Heart right ventricle (tissue), 16 donors: ENCODE measurements at regions of chr2 and their contacts with region 1.

Region 1: GRCh38 chr2:207746131-207746530 is 23.6 kb downstream of the FZD5 start:
- DNase-seq: peak; percentile 17 to 28
- ATAC-seq: peak; percentile 71 to 87 (median 82)
- H3K4me3 ChIP-seq: no peak overlapping the region
- H3K27ac ChIP-seq: no peak overlapping the region
- H3K4me1 ChIP-seq: no peaks in the 10 kb centered on the region
- H3K27me3 ChIP-seq: no peaks in the 10 kb centered on the region
- CTCF ChIP-seq: peak; percentile 69 to 92 (median 86)

Region 2: DNA sequence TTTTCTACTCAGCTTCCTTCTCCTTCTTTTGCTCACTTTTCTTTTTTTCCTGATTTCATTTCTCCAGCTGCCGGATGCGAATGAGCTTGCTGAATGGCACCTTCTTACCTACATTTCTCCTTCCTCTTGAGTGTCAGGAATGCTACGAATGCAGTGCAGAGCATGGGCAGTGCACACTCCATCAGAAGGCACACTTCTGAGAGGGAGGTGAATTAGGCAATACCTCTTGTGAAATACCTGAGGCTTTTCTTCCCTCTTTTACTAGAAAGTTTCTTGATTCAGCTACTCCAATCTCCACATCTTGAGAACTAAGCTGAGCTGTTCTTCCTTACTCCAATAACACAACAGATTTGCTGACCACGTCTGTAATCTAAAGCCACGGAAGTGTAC is 228.1 kb after region 1 on chr2:
- intact Hi-C with region 1: loop called in 6 of 10 experiments (anchors 2 to 5 kb)
- DNase-seq: no peak
- ATAC-seq: no peak
- H3K4me3 ChIP-seq: no peak overlapping the region
- H3K27ac ChIP-seq: no peak overlapping the region
- H3K4me1 ChIP-seq: peaks cover 0 to 20% (median 8%) of the 10 kb centered on the region in 9 donors
- H3K27me3 ChIP-seq: no peaks in the 10 kb centered on the region
- CTCF ChIP-seq: no peak

Region 3: DNA sequence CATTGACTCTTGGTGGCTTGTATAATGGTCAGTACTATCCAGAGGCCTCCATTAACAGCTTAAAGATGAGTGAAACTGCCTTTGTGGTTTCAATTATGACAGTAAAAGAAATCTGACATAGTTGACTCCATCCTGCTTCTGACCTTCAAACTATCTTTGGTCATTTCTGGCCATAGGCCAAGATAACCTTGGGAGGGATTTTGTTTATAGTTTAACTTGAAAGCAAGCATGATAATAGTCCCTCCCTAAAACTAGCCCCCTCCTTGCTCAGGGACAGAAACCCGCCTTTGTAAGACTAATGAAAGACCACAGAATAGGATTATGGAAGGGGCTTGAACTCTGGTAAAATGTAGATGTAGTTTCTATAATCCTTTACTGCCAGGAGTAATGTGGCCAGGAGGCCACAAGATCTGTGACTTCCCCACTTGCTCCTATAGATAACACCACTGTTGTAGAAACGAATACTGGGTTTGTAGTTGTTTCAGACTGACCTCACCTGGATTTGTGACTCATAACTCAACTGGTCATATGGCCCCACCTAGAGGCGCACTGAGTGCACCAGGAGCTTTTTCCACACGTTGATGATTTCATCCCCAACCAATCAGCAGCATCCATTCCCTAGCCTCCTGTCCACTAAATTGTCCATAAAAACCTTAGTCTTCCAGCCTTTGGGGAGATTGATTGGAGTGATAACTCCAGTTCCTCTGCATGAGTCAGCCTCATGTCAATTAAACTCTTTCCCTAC is 287.8 kb after region 1 on chr2:
- intact Hi-C with region 1: loop called in 5 of 10 experiments (anchors 5 kb)
- DNase-seq: peak in 1 of 2 donors; percentile 32
- ATAC-seq: peak in 5 of 8 donors; percentile 39 to 81 (median 61)
- H3K4me3 ChIP-seq: no peak overlapping the region
- H3K27ac ChIP-seq: no peak overlapping the region
- H3K4me1 ChIP-seq: peaks cover 0 to 12% (median 5%) of the 10 kb centered on the region in 9 donors
- H3K27me3 ChIP-seq: no peaks in the 10 kb centered on the region
- CTCF ChIP-seq: peak in 8 of 9 donors; percentile 22 to 58 (median 42)

Region 4: GRCh38 chr2:208040199-208041171 is 294.4 kb after region 1 on chr2:
- intact Hi-C with region 1: loop called in 8 of 10 experiments (anchors 5 to 10 kb)
- DNase-seq: peak; percentile 48 to 65
- ATAC-seq: peak in 7 of 8 donors; percentile 56 to 78 (median 72)
- H3K4me3 ChIP-seq: no peak overlapping the region
- H3K27ac ChIP-seq: no peak overlapping the region
- H3K4me1 ChIP-seq: peaks cover 0 to 3% (median 0%) of the 10 kb centered on the region in 9 donors
- H3K27me3 ChIP-seq: no peaks in the 10 kb centered on the region
- CTCF ChIP-seq: peak; percentile 55 to 77 (median 66)

Region 5: DNA sequence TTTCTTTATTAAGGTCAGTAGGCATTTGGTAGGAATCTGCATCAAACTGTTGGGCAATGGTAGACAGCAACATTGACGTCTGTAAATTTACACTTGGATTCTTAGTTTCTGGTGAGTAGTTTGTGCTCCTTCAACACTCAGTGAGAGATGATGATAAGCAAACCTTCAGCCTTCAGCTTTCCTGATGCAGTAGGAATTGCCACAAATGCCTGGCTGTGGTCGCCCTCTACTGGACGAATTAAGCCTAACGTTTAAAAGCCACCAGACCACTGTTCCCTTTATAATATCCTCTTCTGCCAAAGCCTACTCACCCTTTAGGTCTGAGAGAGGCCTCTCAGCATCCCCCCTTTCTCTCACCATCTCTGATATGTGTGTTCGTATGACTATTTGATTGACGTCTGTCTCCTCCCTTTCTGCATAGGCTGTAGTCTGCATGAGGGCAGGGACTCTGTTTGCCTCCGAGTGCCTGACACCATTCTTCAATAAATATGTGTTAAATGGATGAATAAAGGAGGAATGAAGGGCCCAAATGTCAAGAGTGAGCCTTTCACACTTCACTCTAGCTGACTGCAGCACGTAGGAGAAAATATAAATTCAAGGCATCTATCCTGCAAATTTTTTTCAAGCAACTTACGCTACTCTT is 326.2 kb after region 1 on chr2:
- intact Hi-C with region 1: loop called (anchors 2 to 10 kb)
- DNase-seq: peak; percentile 16 to 62
- ATAC-seq: peak; percentile 55 to 81 (median 68)
- H3K4me3 ChIP-seq: no peak overlapping the region
- H3K27ac ChIP-seq: no peak overlapping the region
- H3K4me1 ChIP-seq: peaks cover 0 to 6% (median 0%) of the 10 kb centered on the region in 9 donors
- H3K27me3 ChIP-seq: peaks cover 0 to 15% (median 0%) of the 10 kb centered on the region in 7 donors
- CTCF ChIP-seq: peak; percentile 48 to 87 (median 83)